MCF 10A (cell line): ENCODE measurements at regions of chr17 and their contacts with region 1.

Region 1: GRCh38 chr17:1724506-1725362 is at the start of gene WDR81:
- DNase-seq: peak; percentile 69
- H3K4me3 Mint-ChIP-seq: peak within 1 kb of the TSS; percentile 65
- H3K27ac Mint-ChIP-seq: no peak within 1 kb of the TSS
- H3K4me1 Mint-ChIP-seq: peaks cover 16% of the 10 kb centered on the region
- H3K27me3 Mint-ChIP-seq: no peaks in the 10 kb centered on the region
- CTCF ChIP-seq: no peak
- total RNA-seq, gene WDR81: 17.4 and 19.4 TPM in 2 replicates

Region 2: DNA sequence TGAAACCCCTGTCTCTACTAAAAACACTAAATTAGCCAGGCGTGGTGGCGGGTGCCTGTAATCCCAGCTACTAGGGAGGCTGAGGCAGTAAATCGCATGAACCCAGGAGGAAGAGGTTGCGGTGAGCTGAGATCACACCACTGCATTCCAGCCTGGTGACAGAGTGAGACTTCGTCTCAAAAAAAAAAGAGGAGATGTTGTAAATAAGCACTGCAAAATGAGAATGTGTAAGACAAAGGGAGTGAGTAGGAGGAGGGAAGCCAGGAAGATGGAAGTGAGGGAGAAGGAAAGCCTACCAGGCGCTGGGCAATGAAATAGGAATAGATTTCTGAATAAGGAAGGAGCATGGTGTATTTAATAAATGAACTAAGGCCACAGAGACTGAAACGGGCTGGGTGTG is 31.4 kb before region 1 on chr17:
- CTCF ChIA-PET with region 1: no interaction called
- POLR2A ChIA-PET with region 1: no interaction called
- intact Hi-C with region 1: no loop called
- DNase-seq: no peak
- H3K4me3 Mint-ChIP-seq: no peak overlapping the region
- H3K27ac Mint-ChIP-seq: no peak overlapping the region
- H3K4me1 Mint-ChIP-seq: peaks cover 5% of the 10 kb centered on the region
- H3K27me3 Mint-ChIP-seq: no peaks in the 10 kb centered on the region
- CTCF ChIP-seq: no peak

Region 3: GRCh38 chr17:1783834-1784611 is 59.3 kb after region 1 on chr17:
- CTCF ChIA-PET with region 1: interaction called, 211 read pairs
- POLR2A ChIA-PET with region 1: interaction called, 11 read pairs
- intact Hi-C with region 1: loop called (anchors 1 kb)
- DNase-seq: peak; percentile 62
- H3K4me3 Mint-ChIP-seq: no peak overlapping the region
- H3K27ac Mint-ChIP-seq: peak overlapping the region; percentile 79
- H3K4me1 Mint-ChIP-seq: peaks cover 28% of the 10 kb centered on the region
- H3K27me3 Mint-ChIP-seq: no peaks in the 10 kb centered on the region
- CTCF ChIP-seq: peak; percentile 74

Region 4: DNA sequence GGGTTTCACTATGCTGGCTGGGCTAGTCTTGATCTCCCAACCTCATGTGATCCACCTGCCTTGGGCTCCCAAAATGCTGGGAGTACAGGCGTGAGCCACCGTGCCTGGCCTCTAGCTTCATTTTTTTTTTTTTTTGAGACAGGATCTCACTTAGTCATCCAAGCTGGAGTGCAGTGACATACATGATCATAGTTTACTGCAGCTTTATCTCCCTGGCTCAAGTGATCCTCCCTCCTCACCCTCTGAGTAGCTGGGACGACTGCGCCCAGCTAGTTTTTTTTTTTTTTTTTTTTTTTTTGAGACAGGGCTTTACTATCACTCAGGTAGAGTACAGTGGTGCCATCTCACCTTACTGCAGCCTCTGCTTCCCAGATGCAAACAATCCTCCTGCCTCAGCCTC is 114.8 kb after region 1 on chr17:
- CTCF ChIA-PET with region 1: interaction called, 11 read pairs
- POLR2A ChIA-PET with region 1: no interaction called
- intact Hi-C with region 1: no loop called
- DNase-seq: no peak
- H3K4me3 Mint-ChIP-seq: no peak overlapping the region
- H3K27ac Mint-ChIP-seq: no peak overlapping the region
- H3K4me1 Mint-ChIP-seq: peaks cover 6% of the 10 kb centered on the region
- H3K27me3 Mint-ChIP-seq: no peaks in the 10 kb centered on the region
- CTCF ChIP-seq: no peak

Region 5: GRCh38 chr17:1865252-1866037 is 140.7 kb after region 1 on chr17:
- CTCF ChIA-PET with region 1: interaction called, 38 read pairs
- POLR2A ChIA-PET with region 1: no interaction called
- intact Hi-C with region 1: loop called (anchors 1 kb)
- DNase-seq: peak; percentile 61
- H3K4me3 Mint-ChIP-seq: no peak overlapping the region
- H3K27ac Mint-ChIP-seq: no peak overlapping the region
- H3K4me1 Mint-ChIP-seq: no peaks in the 10 kb centered on the region
- H3K27me3 Mint-ChIP-seq: no peaks in the 10 kb centered on the region
- CTCF ChIP-seq: peak; percentile 68

Region 6: GRCh38 chr17:1882836-1883235 is 158.1 kb after region 1 on chr17:
- CTCF ChIA-PET with region 1: interaction called, 13 read pairs
- POLR2A ChIA-PET with region 1: no interaction called
- intact Hi-C with region 1: no loop called
- DNase-seq: peak; percentile 40
- H3K4me3 Mint-ChIP-seq: no peak overlapping the region
- H3K27ac Mint-ChIP-seq: no peak overlapping the region
- H3K4me1 Mint-ChIP-seq: no peaks in the 10 kb centered on the region
- H3K27me3 Mint-ChIP-seq: no peaks in the 10 kb centered on the region
- CTCF ChIP-seq: peak; percentile 17